Activated CD4-positive, alpha-beta memory T cell treated with anti-CD3 and anti-CD28 coated beads, Interleukin-2, amount 10 ng/mL, durations not matched to agents 7 days and 5 days (primary cell): ENCODE measurements at regions of chr14 and their contacts with region 1.

Region 1: DNA sequence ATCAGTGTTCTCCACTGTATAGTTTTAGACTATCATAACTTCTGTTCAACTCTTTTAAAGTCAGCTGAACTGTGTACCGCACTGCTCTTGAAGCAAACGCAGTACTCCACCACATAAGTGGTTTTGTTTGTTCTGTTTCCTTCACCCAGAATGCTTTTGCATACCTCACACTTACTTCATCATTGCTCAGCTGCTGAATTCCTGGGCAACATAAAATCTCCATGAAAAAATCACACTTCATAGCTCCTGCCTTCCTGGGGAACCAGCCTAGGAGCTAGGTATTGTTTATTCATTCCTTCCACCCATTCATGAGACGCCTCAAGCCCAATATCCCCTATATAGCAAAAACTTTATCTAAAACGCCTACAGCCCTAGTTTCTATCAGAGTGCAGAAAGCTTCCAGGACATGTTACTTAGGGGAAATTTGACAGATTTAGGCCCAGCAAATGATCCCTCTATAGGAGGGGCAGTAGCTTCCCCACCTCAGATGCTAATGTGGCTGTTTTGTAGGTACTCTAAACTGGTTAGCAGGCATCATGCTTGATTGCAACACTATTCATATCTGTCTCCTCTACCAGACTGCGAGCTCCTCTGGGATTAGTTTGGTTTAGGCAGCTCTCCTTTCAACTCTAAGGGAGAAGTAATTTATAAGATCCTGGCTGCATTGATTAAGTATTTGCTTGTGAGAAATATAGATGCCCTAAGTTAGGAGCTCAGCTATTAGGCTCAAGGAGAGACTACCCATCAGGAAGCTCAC is 44.5 kb downstream of the LRRC9 start:
- DNase-seq: no peak
- H3K4me3 Mint-ChIP-seq: no peak overlapping the region
- H3K27ac Mint-ChIP-seq: no peak overlapping the region
- H3K4me1 Mint-ChIP-seq: peaks cover 10% of the 10 kb centered on the region
- H3K27me3 Mint-ChIP-seq: peaks cover 14% of the 10 kb centered on the region

Region 2: GRCh38 chr14:59882957-59883356 is 81.5 kb before region 1 on chr14:
- CTCF ChIA-PET with region 1: no interaction called
- POLR2A ChIA-PET with region 1: no interaction called
- DNase-seq: no peak
- H3K4me3 Mint-ChIP-seq: no peak overlapping the region
- H3K27ac Mint-ChIP-seq: no peak overlapping the region
- H3K4me1 Mint-ChIP-seq: no peaks in the 10 kb centered on the region
- H3K27me3 Mint-ChIP-seq: peaks cover 17% of the 10 kb centered on the region

Region 3: GRCh38 chr14:60064491-60065072 is 100.2 kb after region 1 on chr14:
- CTCF ChIA-PET with region 1: interaction called, 17 read pairs
- POLR2A ChIA-PET with region 1: no interaction called
- DNase-seq: no peak
- H3K4me3 Mint-ChIP-seq: no peak overlapping the region
- H3K27ac Mint-ChIP-seq: no peak overlapping the region
- H3K4me1 Mint-ChIP-seq: no peaks in the 10 kb centered on the region
- H3K27me3 Mint-ChIP-seq: peaks cover 8% of the 10 kb centered on the region

Region 4: GRCh38 chr14:60091550-60092530 is 127.4 kb after region 1 on chr14 and contains the start of gene PCNX4:
- CTCF ChIA-PET with region 1: interaction called, 4 read pairs
- POLR2A ChIA-PET with region 1: interaction called, 10 read pairs
- DNase-seq: peak; percentile 95
- H3K4me3 Mint-ChIP-seq: peak within 1 kb of the TSS; percentile 94
- H3K27ac Mint-ChIP-seq: peak within 1 kb of the TSS; percentile 96
- H3K4me1 Mint-ChIP-seq: peaks cover 41% of the 10 kb centered on the region
- H3K27me3 Mint-ChIP-seq: no peaks in the 10 kb centered on the region
- total RNA-seq, gene PCNX4: 32.6 to 34.7 TPM